ENCODE measurements at regions of chr9 and their contacts with region 1.

Region 1: GRCh38 chr9:36560857-36561221 is 11.9 kb upstream of the MELK start:
- DNase-seq: no peak
- H3K4me3 ChIP-seq: no peak overlapping the region
- H3K27ac ChIP-seq: no peak overlapping the region
- H3K4me1 ChIP-seq: no peaks in the 10 kb centered on the region
- H3K27me3 ChIP-seq: no peaks in the 10 kb centered on the region
- CTCF ChIP-seq: no peak
- EP300 ChIP-seq: no peak
- RAD21 ChIP-seq: no peak

Region 2: GRCh38 chr9:36572515-36573418 is 11.9 kb after region 1 on chr9 and contains the start of gene MELK:
- CTCF ChIA-PET with region 1: interaction called, 12 read pairs
- POLR2A ChIA-PET with region 1: no interaction called
- DNase-seq: peak; percentile 99
- H3K4me3 ChIP-seq: peak within 1 kb of the TSS; percentile 81 to 87
- H3K27ac ChIP-seq: peak within 1 kb of the TSS; percentile 75 to 82
- H3K4me1 ChIP-seq: peaks cover 3 to 7% of the 10 kb centered on the region in 2 experiments; a peak in 3 of 4 replicates
- H3K27me3 ChIP-seq: no peaks in the 10 kb centered on the region
- CTCF ChIP-seq: no peak
- EP300 ChIP-seq: no peak
- RAD21 ChIP-seq: no peak
- polyA plus RNA-seq, gene MELK: 16.5 and 18.0 TPM in 2 replicates

Measured in SK-N-SH (cell line).